ENCODE measurements at regions of chr3 and their contacts with region 1.

Region 1: DNA sequence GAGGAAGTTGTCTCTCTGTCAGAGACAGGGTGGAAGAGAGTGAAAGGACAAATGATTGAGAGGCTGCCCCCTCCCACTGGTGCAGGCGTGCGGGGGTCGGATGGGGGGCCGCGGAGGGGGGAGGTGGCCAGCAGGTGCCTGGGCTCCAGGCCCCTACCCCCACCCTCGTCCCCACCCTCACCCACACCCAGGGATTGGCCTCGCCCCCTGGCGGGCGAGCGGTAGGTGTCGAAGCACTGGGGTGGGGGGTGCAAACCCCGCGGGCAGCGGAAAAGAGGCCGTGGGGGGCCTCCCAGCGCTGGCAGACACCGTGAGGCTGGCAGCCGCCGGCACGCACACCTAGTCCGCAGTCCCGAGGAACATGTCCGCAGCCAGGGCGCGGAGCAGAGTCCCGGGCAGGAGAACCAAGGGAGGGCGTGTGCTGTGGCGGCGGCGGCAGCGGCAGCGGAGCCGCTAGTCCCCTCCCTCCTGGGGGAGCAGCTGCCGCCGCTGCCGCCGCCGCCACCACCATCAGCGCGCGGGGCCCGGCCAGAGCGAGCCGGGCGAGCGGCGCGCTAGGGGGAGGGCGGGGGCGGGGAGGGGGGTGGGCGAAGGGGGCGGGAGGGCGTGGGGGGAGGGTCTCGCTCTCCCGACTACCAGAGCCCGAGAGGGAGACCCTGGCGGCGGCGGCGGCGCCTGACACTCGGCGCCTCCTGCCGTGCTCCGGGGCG is at the start of gene KAT2B:
- DNase-seq: peak; percentile 62 to 70 (median 70)
- H3K4me3 ChIP-seq: peak within 1 kb of the TSS; percentile 75 to 99 (median 87)
- H3K4me3 Mint-ChIP-seq: peak within 1 kb of the TSS; percentile 95 to 96
- H3K27ac ChIP-seq: peak within 1 kb of the TSS; percentile 69 to 87
- H3K27ac Mint-ChIP-seq: peak within 1 kb of the TSS; percentile 90 to 96 (median 94)
- H3K4me1 ChIP-seq: peaks cover 38 to 52% of the 10 kb centered on the region in 2 donors
- H3K4me1 Mint-ChIP-seq: peaks cover 48% of the 10 kb centered on the region
- H3K27me3 ChIP-seq: no peaks in the 10 kb centered on the region
- H3K27me3 Mint-ChIP-seq: peaks cover 0 to 2% (median 0%) of the 10 kb centered on the region in 3 donors
- CTCF ChIP-seq: peak; percentile 94
- polyA plus RNA-seq, gene KAT2B: 2.7 to 14.6 (median 3.5) TPM

Region 2: GRCh38 chr3:19946832-19947548 is 92.9 kb before region 1 on chr3 and contains the start of gene RAB5A:
- intact Hi-C with region 1: loop called (anchors 5 kb)
- DNase-seq: peak; percentile 97 to 99 (median 98)
- H3K4me3 ChIP-seq: peak within 1 kb of the TSS; percentile 75 to 96 (median 95)
- H3K4me3 Mint-ChIP-seq: peak within 1 kb of the TSS; percentile 98
- H3K27ac ChIP-seq: peak within 1 kb of the TSS; percentile 98 to 99
- H3K27ac Mint-ChIP-seq: peak within 1 kb of the TSS; percentile 97 to 99 (median 98)
- H3K4me1 ChIP-seq: peaks cover 20 to 32% of the 10 kb centered on the region in 2 donors
- H3K4me1 Mint-ChIP-seq: peaks cover 38% of the 10 kb centered on the region
- H3K27me3 ChIP-seq: no peaks in the 10 kb centered on the region
- H3K27me3 Mint-ChIP-seq: no peaks in the 10 kb centered on the region
- CTCF ChIP-seq: no peak
- polyA plus RNA-seq, gene RAB5A: 25.7 to 60.2 (median 33.8) TPM

Region 3: GRCh38 chr3:20013396-20013795 is 26.5 kb before region 1 on chr3:
- intact Hi-C with region 1: no loop called
- DNase-seq: no peak
- H3K4me3 ChIP-seq: no peak overlapping the region
- H3K4me3 Mint-ChIP-seq: no peak overlapping the region
- H3K27ac ChIP-seq: no peak overlapping the region
- H3K27ac Mint-ChIP-seq: no peak overlapping the region
- H3K4me1 ChIP-seq: no peaks in the 10 kb centered on the region
- H3K4me1 Mint-ChIP-seq: no peaks in the 10 kb centered on the region
- H3K27me3 ChIP-seq: no peaks in the 10 kb centered on the region
- H3K27me3 Mint-ChIP-seq: no peaks in the 10 kb centered on the region
- CTCF ChIP-seq: no peak

Region 4: GRCh38 chr3:20074226-20075063 is 34.5 kb after region 1 on chr3:
- intact Hi-C with region 1: loop called in 1 of 2 experiments (anchors 5 kb)
- DNase-seq: no peak
- H3K4me3 ChIP-seq: no peak overlapping the region
- H3K4me3 Mint-ChIP-seq: no peak overlapping the region
- H3K27ac ChIP-seq: no peak overlapping the region
- H3K27ac Mint-ChIP-seq: no peak overlapping the region
- H3K4me1 ChIP-seq: no peaks in the 10 kb centered on the region
- H3K4me1 Mint-ChIP-seq: no peaks in the 10 kb centered on the region
- H3K27me3 ChIP-seq: no peaks in the 10 kb centered on the region
- H3K27me3 Mint-ChIP-seq: no peaks in the 10 kb centered on the region
- CTCF ChIP-seq: no peak

Region 5: GRCh38 chr3:20125897-20126296 is 86.0 kb after region 1 on chr3:
- intact Hi-C with region 1: loop called in 1 of 2 experiments (anchors 5 kb)
- DNase-seq: peak; percentile 58 to 80 (median 79)
- H3K4me3 ChIP-seq: peak overlapping the region in 2 of 3 experiments; percentile 51 to 60
- H3K4me3 Mint-ChIP-seq: peak overlapping the region; percentile 67 to 87
- H3K27ac ChIP-seq: peak overlapping the region; percentile 68 to 79
- H3K27ac Mint-ChIP-seq: peak overlapping the region; percentile 83 to 96 (median 93)
- H3K4me1 ChIP-seq: peaks cover 12 to 13% of the 10 kb centered on the region in 2 donors
- H3K4me1 Mint-ChIP-seq: peaks cover 10% of the 10 kb centered on the region
- H3K27me3 ChIP-seq: no peaks in the 10 kb centered on the region
- H3K27me3 Mint-ChIP-seq: peaks cover 0 to 1% (median 0%) of the 10 kb centered on the region in 3 donors
- CTCF ChIP-seq: no peak

Region 6: DNA sequence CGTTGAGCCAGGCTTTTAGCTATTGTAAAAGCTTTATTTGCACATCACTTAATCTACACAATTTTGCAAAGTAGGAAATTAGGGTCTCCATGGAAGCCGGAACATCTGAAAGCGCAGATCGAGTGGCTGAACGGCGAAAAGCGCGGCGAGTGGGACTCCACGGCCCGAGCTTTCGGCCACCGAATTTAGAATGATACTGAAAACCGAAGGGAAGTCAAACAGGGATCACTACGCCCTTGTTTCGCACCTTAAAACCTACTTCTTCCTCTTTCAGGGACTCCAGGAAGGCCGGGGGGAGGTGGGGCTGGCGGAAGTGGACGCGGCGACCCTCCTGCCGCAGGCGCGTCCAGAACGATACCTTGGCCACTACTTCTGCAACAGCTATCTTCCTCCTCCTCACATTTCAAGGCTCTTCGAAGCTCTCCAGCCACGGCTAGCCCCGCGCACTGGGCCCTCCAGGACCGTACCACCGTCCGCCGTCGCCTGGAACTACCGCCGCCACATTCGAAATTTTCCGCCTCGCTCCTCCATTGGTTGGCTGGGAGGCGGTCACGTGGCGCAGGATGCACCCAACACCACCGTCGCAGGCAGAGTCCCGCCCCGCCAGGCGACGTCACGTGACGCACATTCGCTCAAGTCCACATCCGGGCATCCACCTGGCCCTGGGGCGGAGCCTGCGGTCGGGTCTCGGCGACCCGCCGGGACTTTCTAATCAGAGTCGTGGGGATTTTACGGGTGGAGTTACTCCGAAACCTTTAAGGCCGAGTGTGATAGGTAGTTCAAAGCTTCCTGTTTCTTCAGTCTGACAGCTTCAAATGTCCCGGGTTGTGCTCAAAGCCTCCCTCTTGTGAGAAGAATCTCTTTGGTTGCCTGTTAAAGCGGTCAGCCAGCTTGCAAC is 146.0 kb after region 1 on chr3 and contains the start of gene SGO1:
- intact Hi-C with region 1: loop called (anchors 5 to 10 kb)
- DNase-seq: peak; percentile 97 to 100 (median 99)
- H3K4me3 ChIP-seq: peak within 1 kb of the TSS; percentile 75 to 90 (median 82)
- H3K4me3 Mint-ChIP-seq: no peak within 1 kb of the TSS
- H3K27ac ChIP-seq: peak within 1 kb of the TSS; percentile 67 to 95
- H3K27ac Mint-ChIP-seq: no peak within 1 kb of the TSS
- H3K4me1 ChIP-seq: peaks cover 14 to 18% of the 10 kb centered on the region in 2 donors
- H3K4me1 Mint-ChIP-seq: peaks cover 2% of the 10 kb centered on the region
- H3K27me3 ChIP-seq: no peaks in the 10 kb centered on the region
- H3K27me3 Mint-ChIP-seq: no peaks in the 10 kb centered on the region
- CTCF ChIP-seq: no peak
- polyA plus RNA-seq, gene SGO1: 0.07 to 0.42 (median 0.15) TPM